ENCODE measurements at regions of chr4 and their contacts with region 1.

Region 1: GRCh38 chr4:153432968-153433753 is 33.0 kb upstream of the TMEM131L start:
- DNase-seq: peak; percentile 22 to 72 (median 59)
- ATAC-seq: peak; percentile 90
- H3K4me3 ChIP-seq: peak overlapping the region; percentile 65
- H3K4me3 Mint-ChIP-seq: peak overlapping the region; percentile 78 to 98 (median 87)
- H3K27ac ChIP-seq: peak overlapping the region; percentile 66
- H3K27ac Mint-ChIP-seq: peak overlapping the region; percentile 88 to 98 (median 96)
- H3K4me1 ChIP-seq: peaks cover 13 to 54% of the 10 kb centered on the region in 2 donors
- H3K4me1 Mint-ChIP-seq: peaks cover 31 to 83% (median 72%) of the 10 kb centered on the region in 7 donors
- H3K27me3 ChIP-seq: no peaks in the 10 kb centered on the region
- H3K27me3 Mint-ChIP-seq: no peaks in the 10 kb centered on the region

Region 2: GRCh38 chr4:152454398-152455011 is 978.7 kb before region 1 on chr4:
- CTCF ChIA-PET with region 1: no interaction called
- POLR2A ChIA-PET with region 1: no interaction called
- intact Hi-C with region 1: no loop called
- DNase-seq: peak in 2 of 9 donors; percentile 6 to 7
- ATAC-seq: no peak
- H3K4me3 ChIP-seq: no peak overlapping the region
- H3K4me3 Mint-ChIP-seq: no peak overlapping the region
- H3K27ac ChIP-seq: no peak overlapping the region
- H3K27ac Mint-ChIP-seq: no peak overlapping the region
- H3K4me1 ChIP-seq: peaks cover 5 to 9% of the 10 kb centered on the region in 2 donors
- H3K4me1 Mint-ChIP-seq: peaks cover 30 to 53% (median 41%) of the 10 kb centered on the region in 7 donors
- H3K27me3 ChIP-seq: no peaks in the 10 kb centered on the region
- H3K27me3 Mint-ChIP-seq: no peaks in the 10 kb centered on the region

Region 3: GRCh38 chr4:153153339-153153871 is 279.8 kb before region 1 on chr4:
- CTCF ChIA-PET with region 1: no interaction called
- POLR2A ChIA-PET with region 1: no interaction called
- intact Hi-C with region 1: loop called in 1 of 2 experiments (anchors 5 kb)
- DNase-seq: peak; percentile 53 to 84 (median 78)
- ATAC-seq: peak; percentile 95
- H3K4me3 ChIP-seq: peak overlapping the region; percentile 81
- H3K4me3 Mint-ChIP-seq: peak overlapping the region; percentile 91 to 96 (median 92)
- H3K27ac ChIP-seq: peak overlapping the region; percentile 69
- H3K27ac Mint-ChIP-seq: peak overlapping the region; percentile 78 to 90 (median 85)
- H3K4me1 ChIP-seq: peaks cover 3 to 12% of the 10 kb centered on the region in 2 donors
- H3K4me1 Mint-ChIP-seq: peaks cover 23 to 42% (median 38%) of the 10 kb centered on the region in 7 donors
- H3K27me3 ChIP-seq: no peaks in the 10 kb centered on the region
- H3K27me3 Mint-ChIP-seq: peaks cover 0 to 43% (median 0%) of the 10 kb centered on the region in 5 donors

Region 4: DNA sequence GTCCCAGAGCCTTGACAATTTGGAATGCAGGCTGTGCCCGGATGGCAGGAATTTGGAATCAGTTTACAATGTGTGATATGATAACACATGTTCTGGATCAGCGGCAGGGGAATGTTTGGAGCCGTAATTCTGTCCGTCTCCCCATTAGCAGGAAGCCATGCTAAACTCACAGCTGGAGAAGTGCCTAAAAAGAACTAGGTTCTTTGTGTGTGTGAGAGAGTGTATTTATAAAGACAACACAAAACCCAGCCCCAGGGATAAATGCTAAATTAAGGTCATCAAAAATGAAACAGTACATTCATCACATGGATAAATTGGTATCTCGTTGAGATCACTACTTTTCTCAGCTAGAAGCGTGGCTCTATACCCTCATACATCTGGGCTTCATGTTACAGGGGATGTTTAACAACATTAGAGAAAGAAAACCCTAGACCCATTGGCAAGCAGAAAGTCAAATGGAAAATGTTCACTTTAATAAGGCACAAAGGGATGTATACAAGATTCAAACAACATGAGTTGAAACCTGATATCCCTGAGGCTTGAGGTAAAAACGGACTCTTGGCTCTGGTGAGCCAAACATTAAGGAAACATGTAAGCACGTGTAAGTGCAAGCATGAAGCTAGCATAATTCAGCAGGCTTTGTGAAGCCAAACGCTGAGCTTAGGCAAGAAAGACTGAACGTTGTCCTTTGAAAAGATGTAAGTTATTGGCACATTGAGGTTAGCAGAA is 15.0 kb after region 1 on chr4:
- CTCF ChIA-PET with region 1: interaction called, 11 read pairs
- POLR2A ChIA-PET with region 1: interaction called, 5 read pairs
- intact Hi-C with region 1: loop called in 1 of 2 experiments (anchors 2 kb)
- DNase-seq: no peak
- ATAC-seq: no peak
- H3K4me3 ChIP-seq: no peak overlapping the region
- H3K4me3 Mint-ChIP-seq: no peak overlapping the region
- H3K27ac ChIP-seq: no peak overlapping the region
- H3K27ac Mint-ChIP-seq: peak overlapping the region in 2 of 9 donors; percentile 64 to 92
- H3K4me1 ChIP-seq: peaks cover 8 to 16% of the 10 kb centered on the region in 2 donors
- H3K4me1 Mint-ChIP-seq: peaks cover 21 to 44% (median 36%) of the 10 kb centered on the region in 7 donors
- H3K27me3 ChIP-seq: no peaks in the 10 kb centered on the region
- H3K27me3 Mint-ChIP-seq: no peaks in the 10 kb centered on the region

Region 5: DNA sequence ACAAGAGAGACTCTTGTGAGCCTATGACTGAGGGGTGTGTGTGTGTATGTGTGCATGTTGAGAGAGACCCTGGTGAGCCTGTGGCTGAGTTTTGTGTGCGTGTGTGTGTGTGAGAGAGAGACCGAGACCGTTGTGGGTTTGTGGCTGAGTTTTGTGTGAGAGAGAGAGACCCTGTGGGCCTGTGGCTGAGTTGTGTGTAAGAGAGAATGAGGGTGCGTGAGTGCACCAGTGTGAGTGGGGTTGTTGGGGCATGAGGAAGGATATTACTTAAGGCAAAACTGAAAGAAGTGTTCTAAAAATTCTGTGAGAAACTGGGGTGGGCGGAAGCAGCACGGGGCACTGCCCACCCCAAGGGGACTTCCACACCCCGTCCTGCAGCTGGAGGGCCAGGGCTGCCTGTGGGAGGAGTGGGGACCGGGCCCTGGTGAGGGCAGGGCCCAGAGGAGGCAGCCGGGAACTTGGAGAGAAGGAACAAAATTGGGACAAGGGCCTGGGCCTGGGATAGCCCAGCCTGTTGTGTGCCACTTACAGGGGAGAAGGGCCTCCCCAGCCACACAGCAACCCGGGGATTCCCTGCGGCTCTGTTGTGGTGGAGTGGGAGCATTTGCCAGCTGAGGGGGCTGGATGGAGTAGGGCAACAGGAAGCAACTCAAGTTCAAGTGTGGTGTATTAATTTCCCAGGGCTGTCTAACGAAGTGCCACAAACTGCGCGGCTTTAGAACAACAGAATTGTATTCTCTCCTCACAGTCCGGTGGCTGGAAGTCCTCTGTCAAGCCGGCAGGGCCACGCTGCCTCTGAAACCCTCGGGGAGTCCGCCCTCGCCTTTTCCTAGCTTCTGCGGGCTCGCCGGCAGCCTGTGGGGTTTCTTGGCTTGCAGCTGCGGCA is 55.1 kb after region 1 on chr4:
- CTCF ChIA-PET with region 1: interaction called, 11 read pairs
- POLR2A ChIA-PET with region 1: interaction called, 3 read pairs
- intact Hi-C with region 1: loop called (anchors 1 kb)
- DNase-seq: peak; percentile 51 to 87 (median 79)
- ATAC-seq: peak; percentile 81
- H3K4me3 ChIP-seq: peak overlapping the region; percentile 59
- H3K4me3 Mint-ChIP-seq: peak overlapping the region; percentile 79 to 93 (median 84)
- H3K27ac ChIP-seq: peak overlapping the region; percentile 85
- H3K27ac Mint-ChIP-seq: peak overlapping the region; percentile 87 to 99 (median 95)
- H3K4me1 ChIP-seq: peaks cover 57 to 71% of the 10 kb centered on the region in 2 donors
- H3K4me1 Mint-ChIP-seq: peaks cover 68 to 91% (median 81%) of the 10 kb centered on the region in 7 donors
- H3K27me3 ChIP-seq: no peaks in the 10 kb centered on the region
- H3K27me3 Mint-ChIP-seq: no peaks in the 10 kb centered on the region

Region 6: DNA sequence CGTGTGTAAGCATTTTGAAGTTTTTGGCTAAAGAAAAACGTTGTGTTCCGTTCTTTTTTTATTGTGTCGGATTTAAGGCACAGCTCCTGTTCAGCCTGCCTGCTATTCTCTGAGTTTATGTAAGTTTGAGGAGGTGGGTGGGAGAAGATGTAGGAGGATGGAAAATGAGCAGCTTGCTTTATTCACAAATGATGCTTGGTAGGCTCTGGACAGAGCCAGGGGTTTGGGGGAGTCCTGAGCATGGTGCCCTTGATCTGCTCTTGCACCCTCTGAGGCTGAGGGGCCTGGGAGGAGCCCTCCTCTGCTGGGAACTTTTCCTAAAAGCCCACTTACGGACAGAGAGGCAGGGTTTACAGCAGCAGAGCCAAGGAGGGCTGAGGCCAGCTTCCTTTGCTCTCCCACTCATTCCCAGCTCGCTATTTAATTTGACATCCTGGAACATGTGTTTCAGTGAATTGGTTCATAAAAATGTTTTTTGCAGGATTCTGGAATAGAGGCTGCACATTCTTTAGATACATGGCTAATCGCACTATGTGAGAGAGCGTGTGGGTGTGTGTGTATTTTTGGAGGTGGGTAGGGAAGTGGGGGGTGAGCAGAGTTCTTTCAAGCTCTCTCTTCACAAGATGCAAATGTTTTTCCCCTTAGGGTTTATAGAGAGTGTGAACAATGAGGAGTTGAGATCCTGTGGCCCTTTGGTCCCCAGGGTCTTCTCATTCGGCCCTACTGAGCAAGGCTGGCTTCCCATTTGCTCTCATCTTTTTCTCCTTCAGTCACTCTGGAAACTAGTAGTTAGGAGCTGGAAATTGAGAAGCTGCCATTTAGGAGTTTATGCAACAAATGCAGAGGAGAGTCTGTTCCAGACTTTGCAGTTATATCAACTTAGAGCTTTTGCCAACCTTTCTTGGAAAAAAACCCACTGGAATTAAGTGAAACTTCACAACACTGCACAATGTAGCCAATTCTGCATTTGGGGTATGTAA is 65.1 kb after region 1 on chr4:
- CTCF ChIA-PET with region 1: interaction called, 5 read pairs
- POLR2A ChIA-PET with region 1: interaction called, 3 read pairs
- intact Hi-C with region 1: loop called in 1 of 2 experiments (anchors 1 kb)
- DNase-seq: peak in 4 of 9 donors; percentile 31 to 46 (median 44)
- ATAC-seq: peak; percentile 60
- H3K4me3 ChIP-seq: peak overlapping the region; percentile 20
- H3K4me3 Mint-ChIP-seq: peak overlapping the region; percentile 74 to 85 (median 80)
- H3K27ac ChIP-seq: peak overlapping the region; percentile 83
- H3K27ac Mint-ChIP-seq: peak overlapping the region; percentile 94 to 100 (median 98)
- H3K4me1 ChIP-seq: peaks cover 37 to 89% of the 10 kb centered on the region in 2 donors
- H3K4me1 Mint-ChIP-seq: peaks cover 72 to 99% (median 91%) of the 10 kb centered on the region in 7 donors
- H3K27me3 ChIP-seq: no peaks in the 10 kb centered on the region
- H3K27me3 Mint-ChIP-seq: no peaks in the 10 kb centered on the region

Region 7: GRCh38 chr4:153643406-153644383 is 210.5 kb after region 1 on chr4:
- CTCF ChIA-PET with region 1: no interaction called
- POLR2A ChIA-PET with region 1: interaction called, 3 read pairs
- intact Hi-C with region 1: loop called (anchors 1 to 5 kb)
- DNase-seq: peak in 7 of 9 donors; percentile 25 to 73 (median 56)
- ATAC-seq: peak; percentile 91
- H3K4me3 ChIP-seq: no peak overlapping the region
- H3K4me3 Mint-ChIP-seq: peak overlapping the region in 6 of 10 donors; percentile 0 to 46 (median 22)
- H3K27ac ChIP-seq: no peak overlapping the region
- H3K27ac Mint-ChIP-seq: peak overlapping the region in 7 of 9 donors; percentile 0 to 69 (median 8)
- H3K4me1 ChIP-seq: no peaks in the 10 kb centered on the region
- H3K4me1 Mint-ChIP-seq: peaks cover 4 to 22% (median 18%) of the 10 kb centered on the region in 7 donors
- H3K27me3 ChIP-seq: no peaks in the 10 kb centered on the region
- H3K27me3 Mint-ChIP-seq: no peaks in the 10 kb centered on the region

Region 8: GRCh38 chr4:153661211-153661822 is 228.2 kb after region 1 on chr4:
- CTCF ChIA-PET with region 1: no interaction called
- POLR2A ChIA-PET with region 1: no interaction called
- intact Hi-C with region 1: no loop called
- DNase-seq: no peak
- ATAC-seq: peak; percentile 81
- H3K4me3 ChIP-seq: no peak overlapping the region
- H3K4me3 Mint-ChIP-seq: no peak overlapping the region
- H3K27ac ChIP-seq: no peak overlapping the region
- H3K27ac Mint-ChIP-seq: no peak overlapping the region
- H3K4me1 ChIP-seq: no peaks in the 10 kb centered on the region
- H3K4me1 Mint-ChIP-seq: peaks cover 0 to 5% (median 0%) of the 10 kb centered on the region in 7 donors
- H3K27me3 ChIP-seq: no peaks in the 10 kb centered on the region
- H3K27me3 Mint-ChIP-seq: peaks cover 0 to 15% (median 7%) of the 10 kb centered on the region in 5 donors